Right lobe of liver (tissue), 6 donors: ENCODE measurements at regions of chr9 and their contacts with region 1.

Region 1: DNA sequence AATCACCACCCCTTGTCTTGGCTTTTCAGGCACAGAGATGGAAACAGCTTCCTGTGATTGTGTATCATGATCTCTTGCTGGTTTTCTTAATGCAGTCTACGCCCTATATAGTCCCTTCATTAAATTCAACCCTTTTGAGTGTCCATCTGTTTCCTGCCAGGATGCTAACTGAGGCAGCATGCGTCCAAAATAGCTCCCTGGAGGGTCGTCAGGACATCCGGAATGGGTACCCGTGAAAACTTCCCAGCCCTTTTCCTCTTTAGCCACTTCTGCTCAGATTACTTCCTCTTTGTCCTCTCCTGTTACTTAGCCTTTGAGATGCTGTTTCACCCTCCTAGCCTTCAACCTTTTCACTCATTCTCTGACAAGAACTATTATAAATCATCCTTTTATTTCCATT is 79.8 kb upstream of the KLF9 start:
- DNase-seq: peak in 1 of 3 donors; percentile 31
- ATAC-seq: no peak
- H3K4me3 ChIP-seq: no peak overlapping the region
- H3K27ac ChIP-seq: no peak overlapping the region
- H3K4me1 ChIP-seq: no peaks in the 10 kb centered on the region
- H3K27me3 ChIP-seq: no peaks in the 10 kb centered on the region
- CTCF ChIP-seq: no peak
- POLR2A ChIP-seq: no peak

Region 2: GRCh38 chr9:70539001-70539400 is 44.8 kb after region 1 on chr9:
- intact Hi-C with region 1: no loop called
- DNase-seq: no peak
- ATAC-seq: no peak
- H3K4me3 ChIP-seq: no peak overlapping the region
- H3K27ac ChIP-seq: no peak overlapping the region
- H3K4me1 ChIP-seq: no peaks in the 10 kb centered on the region
- H3K27me3 ChIP-seq: no peaks in the 10 kb centered on the region
- CTCF ChIP-seq: no peak
- POLR2A ChIP-seq: no peak

Region 3: GRCh38 chr9:70602321-70603019 is 108.2 kb after region 1 on chr9:
- intact Hi-C with region 1: loop called in 1 of 2 experiments (anchors 10 kb)
- DNase-seq: peak in 1 of 3 donors; percentile 58
- ATAC-seq: peak; percentile 82 to 89 (median 85)
- H3K4me3 ChIP-seq: no peak overlapping the region
- H3K27ac ChIP-seq: peak overlapping the region in 1 of 3 donors; percentile 6
- H3K4me1 ChIP-seq: peaks cover 0 to 8% (median 3%) of the 10 kb centered on the region in 4 donors
- H3K27me3 ChIP-seq: no peaks in the 10 kb centered on the region
- CTCF ChIP-seq: peak; percentile 63 to 94 (median 73)
- POLR2A ChIP-seq: no peak

Region 4: DNA sequence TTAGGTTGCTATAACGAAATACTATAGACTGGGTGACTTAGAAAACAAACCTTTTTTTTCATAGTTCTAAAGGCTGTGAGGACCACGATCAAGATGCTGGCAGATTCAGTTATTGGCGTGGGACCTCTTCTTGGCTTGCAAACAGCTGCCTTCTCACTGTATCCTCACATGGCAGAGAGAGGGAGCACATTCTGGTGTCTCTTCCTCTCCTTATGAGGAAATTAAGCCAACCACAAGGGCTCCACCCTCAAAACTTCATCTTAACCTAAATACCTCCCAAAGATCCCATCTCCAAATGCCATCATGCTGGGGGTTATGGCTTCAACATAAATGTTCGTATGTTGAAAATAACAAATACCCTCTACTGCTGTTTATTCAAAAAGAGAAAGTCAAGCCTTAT is 1077.0 kb after region 1 on chr9:
- intact Hi-C with region 1: no loop called
- DNase-seq: no peak
- ATAC-seq: no peak
- H3K4me3 ChIP-seq: no peak overlapping the region
- H3K27ac ChIP-seq: no peak overlapping the region
- H3K4me1 ChIP-seq: no peaks in the 10 kb centered on the region
- H3K27me3 ChIP-seq: no peaks in the 10 kb centered on the region
- CTCF ChIP-seq: no peak
- POLR2A ChIP-seq: no peak